ENCODE measurements at regions of chr6 and their contacts with region 1.

Region 1: GRCh38 chr6:116371120-116371917 is 572 bp downstream of the DSE start:
- DNase-seq: no peak
- ATAC-seq: peak; percentile 37
- H3K4me3 ChIP-seq: peak overlapping the region; percentile 62 to 89 (median 85)
- H3K4me3 Mint-ChIP-seq: peak overlapping the region; percentile 92
- H3K27ac ChIP-seq: peak overlapping the region in 1 of 2 donors; percentile 91
- H3K27ac Mint-ChIP-seq: peak overlapping the region; percentile 85
- H3K4me1 ChIP-seq: peaks cover 28 to 30% of the 10 kb centered on the region in 2 donors
- H3K4me1 Mint-ChIP-seq: peaks cover 30% of the 10 kb centered on the region
- H3K27me3 ChIP-seq: peaks cover 0 to 2% (median 0%) of the 10 kb centered on the region in 4 experiments
- H3K27me3 Mint-ChIP-seq: peaks cover 10% of the 10 kb centered on the region
- CTCF ChIP-seq: no peak

Region 2: DNA sequence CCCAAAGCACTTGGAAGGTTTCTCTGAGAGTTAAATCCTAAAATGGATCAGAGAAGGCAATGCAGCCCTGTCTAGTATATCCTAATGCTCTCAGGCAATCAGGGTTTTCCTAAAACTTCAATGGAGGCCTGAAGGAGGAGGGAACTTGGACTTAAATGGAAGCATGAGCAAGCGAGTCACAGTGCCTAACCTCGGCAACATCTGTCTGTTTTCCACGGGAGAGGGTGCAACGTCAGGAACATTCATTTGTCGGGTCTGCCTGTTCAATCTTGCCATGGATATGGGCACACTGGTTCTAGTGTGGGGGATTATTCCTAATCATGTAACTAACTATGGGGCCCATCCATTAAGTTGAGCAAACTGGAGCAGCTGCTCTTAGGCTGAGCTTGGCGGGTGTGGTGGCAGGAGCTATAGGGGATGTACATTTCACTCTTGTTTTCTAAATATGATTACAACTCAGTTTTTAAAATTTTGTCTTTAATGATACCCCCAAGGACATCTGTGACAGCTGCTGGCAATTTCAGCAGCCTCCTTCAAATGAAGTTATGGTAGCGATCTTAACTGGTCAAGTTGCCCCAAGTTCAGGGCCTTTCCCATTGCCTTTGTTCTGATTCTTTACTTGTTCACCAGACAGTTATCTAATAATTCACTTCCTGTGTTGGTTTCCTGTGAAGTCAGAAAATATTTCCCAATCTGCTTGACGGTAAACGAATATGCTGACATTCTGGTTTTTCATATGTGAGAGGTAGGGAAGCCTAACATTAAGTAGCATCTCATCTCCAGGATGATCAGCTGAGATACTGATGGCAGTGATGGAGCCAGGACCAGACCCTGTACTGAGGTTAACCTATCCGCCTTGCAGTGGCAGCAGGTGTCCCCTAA is 21.1 kb after region 1 on chr6:
- CTCF ChIA-PET with region 1: interaction called, 5 read pairs
- POLR2A ChIA-PET with region 1: interaction called, 3 read pairs
- intact Hi-C with region 1: loop called (anchors 2 kb)
- DNase-seq: peak; percentile 68
- ATAC-seq: peak; percentile 40
- H3K4me3 ChIP-seq: peak overlapping the region in 1 of 5 experiments; percentile 19
- H3K4me3 Mint-ChIP-seq: peak overlapping the region; percentile 66
- H3K27ac ChIP-seq: peak overlapping the region; percentile 39 to 93
- H3K27ac Mint-ChIP-seq: peak overlapping the region; percentile 81
- H3K4me1 ChIP-seq: peaks cover 71 to 77% of the 10 kb centered on the region in 2 donors
- H3K4me1 Mint-ChIP-seq: peaks cover 67% of the 10 kb centered on the region
- H3K27me3 ChIP-seq: no peaks in the 10 kb centered on the region
- H3K27me3 Mint-ChIP-seq: no peaks in the 10 kb centered on the region
- CTCF ChIP-seq: no peak

Region 3: GRCh38 chr6:116405138-116405537 is 33.8 kb after region 1 on chr6:
- CTCF ChIA-PET with region 1: interaction called, 6 read pairs
- POLR2A ChIA-PET with region 1: interaction called, 4 read pairs
- intact Hi-C with region 1: loop called (anchors 1 kb)
- DNase-seq: peak; percentile 71
- ATAC-seq: peak; percentile 53
- H3K4me3 ChIP-seq: peak overlapping the region in 3 of 5 experiments; percentile 14 to 42 (median 18)
- H3K4me3 Mint-ChIP-seq: peak overlapping the region; percentile 61
- H3K27ac ChIP-seq: peak overlapping the region; percentile 70 to 84
- H3K27ac Mint-ChIP-seq: peak overlapping the region; percentile 96
- H3K4me1 ChIP-seq: peaks cover 58 to 60% of the 10 kb centered on the region in 2 donors
- H3K4me1 Mint-ChIP-seq: peaks cover 53% of the 10 kb centered on the region
- H3K27me3 ChIP-seq: no peaks in the 10 kb centered on the region
- H3K27me3 Mint-ChIP-seq: no peaks in the 10 kb centered on the region
- CTCF ChIP-seq: no peak

Region 4: GRCh38 chr6:116476002-116476678 is 104.8 kb after region 1 on chr6:
- CTCF ChIA-PET with region 1: no interaction called
- POLR2A ChIA-PET with region 1: no interaction called
- intact Hi-C with region 1: loop called (anchors 1 kb)
- DNase-seq: peak; percentile 75
- ATAC-seq: peak; percentile 99
- H3K4me3 ChIP-seq: peak overlapping the region; percentile 9 to 63 (median 25)
- H3K4me3 Mint-ChIP-seq: peak overlapping the region; percentile 78
- H3K27ac ChIP-seq: peak overlapping the region; percentile 68 to 72
- H3K27ac Mint-ChIP-seq: peak overlapping the region; percentile 92
- H3K4me1 ChIP-seq: peaks cover 24 to 26% of the 10 kb centered on the region in 2 donors
- H3K4me1 Mint-ChIP-seq: peaks cover 33% of the 10 kb centered on the region
- H3K27me3 ChIP-seq: no peaks in the 10 kb centered on the region
- H3K27me3 Mint-ChIP-seq: no peaks in the 10 kb centered on the region
- CTCF ChIP-seq: no peak

Region 5: GRCh38 chr6:116492331-116493067 is 121.2 kb after region 1 on chr6:
- CTCF ChIA-PET with region 1: no interaction called
- POLR2A ChIA-PET with region 1: no interaction called
- intact Hi-C with region 1: no loop called
- DNase-seq: no peak
- ATAC-seq: no peak
- H3K4me3 ChIP-seq: no peak overlapping the region
- H3K4me3 Mint-ChIP-seq: no peak overlapping the region
- H3K27ac ChIP-seq: no peak overlapping the region
- H3K27ac Mint-ChIP-seq: no peak overlapping the region
- H3K4me1 ChIP-seq: no peaks in the 10 kb centered on the region
- H3K4me1 Mint-ChIP-seq: no peaks in the 10 kb centered on the region
- H3K27me3 ChIP-seq: peaks cover 0 to 3% (median 0%) of the 10 kb centered on the region in 4 experiments
- H3K27me3 Mint-ChIP-seq: peaks cover 12% of the 10 kb centered on the region
- CTCF ChIP-seq: no peak

Measured in B cell (primary cell).